ENCODE measurements at regions of chr16 and their contacts with region 1.

Region 1: DNA sequence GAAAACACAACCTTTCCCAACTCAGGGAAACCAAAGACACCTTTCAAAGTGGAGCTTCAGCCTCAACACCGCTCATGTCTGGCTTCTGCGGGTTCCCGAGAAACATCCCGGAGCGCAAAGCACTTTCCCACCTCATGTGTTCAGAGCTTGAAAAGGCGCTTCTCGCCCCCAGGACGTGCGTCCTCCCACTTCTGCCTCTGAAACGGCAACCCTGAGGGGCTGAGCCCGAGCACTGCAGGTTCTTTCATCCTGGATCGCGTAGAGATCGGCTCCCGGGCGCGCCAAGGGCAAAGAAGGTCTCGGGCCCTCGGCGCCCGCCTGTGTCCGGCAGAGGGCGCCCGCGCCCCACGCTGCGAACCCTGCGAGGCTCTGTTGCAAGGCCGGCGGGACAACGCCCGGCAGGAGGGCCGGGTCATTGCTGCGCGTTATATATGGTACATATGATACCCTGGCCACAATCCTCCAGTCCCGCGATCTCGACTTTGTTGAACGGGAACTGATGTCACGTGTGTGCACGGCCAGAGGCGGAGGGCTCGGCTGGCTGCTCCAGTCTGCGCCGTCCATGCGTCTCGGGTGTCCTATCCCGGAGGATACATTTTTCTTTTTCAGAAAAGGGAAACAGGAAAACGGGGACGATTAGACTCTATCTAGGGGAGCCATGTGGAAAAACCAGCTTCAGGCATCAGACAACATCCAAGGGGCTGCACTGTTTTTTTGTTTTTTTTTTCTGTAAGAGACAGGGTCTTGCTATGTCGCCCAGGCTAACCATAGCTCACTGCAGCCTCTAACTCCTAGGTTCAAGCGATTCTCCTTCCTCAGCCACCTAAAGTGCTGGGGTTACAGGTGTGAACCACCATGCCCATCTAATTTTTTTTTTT is 19.1 kb downstream of the COQ7 start:
- DNase-seq: no peak
- H3K4me3 ChIP-seq: peak overlapping the region; percentile 8 to 59 (median 44)
- H3K27ac ChIP-seq: peak overlapping the region in 2 of 4 donors; percentile 39 to 59
- H3K4me1 ChIP-seq: peaks cover 6 to 13% (median 10%) of the 10 kb centered on the region in 3 donors
- H3K27me3 ChIP-seq: no peaks in the 10 kb centered on the region
- CTCF ChIP-seq: peak; percentile 95 to 100 (median 98)
- POLR2A ChIP-seq: no peak

Region 2: GRCh38 chr16:18979936-18980335 is 106.6 kb before region 1 on chr16:
- intact Hi-C with region 1: no loop called
- DNase-seq: no peak
- H3K4me3 ChIP-seq: no peak overlapping the region
- H3K27ac ChIP-seq: no peak overlapping the region
- H3K4me1 ChIP-seq: peaks cover 5 to 22% (median 9%) of the 10 kb centered on the region in 3 donors
- H3K27me3 ChIP-seq: peaks cover 0 to 24% (median 0%) of the 10 kb centered on the region in 4 donors
- CTCF ChIP-seq: no peak
- POLR2A ChIP-seq: no peak

Region 3: DNA sequence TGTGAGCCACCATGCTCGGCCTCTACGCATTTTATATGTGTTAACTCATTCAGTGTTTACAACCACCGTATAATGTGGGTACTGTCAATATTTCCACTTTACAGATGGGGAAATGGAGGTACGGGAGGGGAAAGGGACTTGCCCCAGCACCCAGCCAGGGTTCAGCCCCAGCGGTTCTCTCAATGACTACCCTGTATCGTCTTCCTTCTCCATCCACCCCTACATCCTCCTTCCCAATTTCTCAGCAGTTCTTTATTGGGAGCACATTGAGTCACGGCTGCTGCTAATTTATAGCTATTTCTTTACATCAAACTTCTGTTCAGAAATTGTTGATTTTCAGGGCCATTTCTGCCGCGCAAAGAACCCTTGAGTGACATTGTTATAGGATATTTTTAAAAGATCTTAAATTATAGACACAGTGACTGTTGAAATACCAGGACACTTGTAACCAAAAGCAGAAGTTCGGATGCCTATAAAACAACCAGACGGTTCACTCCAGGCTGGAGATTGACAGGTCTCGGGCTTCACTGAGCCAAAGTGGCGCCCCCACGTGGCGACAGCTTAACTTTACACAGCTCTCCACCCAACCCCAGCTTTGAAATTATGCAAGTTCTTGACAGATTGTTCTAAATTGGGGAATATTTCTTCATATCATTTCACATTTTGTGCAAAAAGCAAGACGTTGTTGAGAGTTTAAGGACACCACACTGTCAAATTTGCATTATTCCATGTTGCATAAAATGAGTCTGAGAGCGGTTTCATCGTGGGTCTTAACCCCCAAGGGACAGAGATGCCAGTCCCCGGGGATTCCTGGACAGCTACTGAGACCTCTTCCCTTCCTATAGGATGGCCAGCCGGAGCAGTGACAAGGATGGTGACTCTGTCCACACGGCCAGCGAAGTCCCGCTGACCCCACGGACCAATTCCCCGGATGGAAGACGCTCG is 93.3 kb after region 1 on chr16:
- intact Hi-C with region 1: loop called (anchors 5 kb)
- DNase-seq: no peak
- H3K4me3 ChIP-seq: no peak overlapping the region
- H3K27ac ChIP-seq: no peak overlapping the region
- H3K4me1 ChIP-seq: peaks cover 0 to 10% (median 4%) of the 10 kb centered on the region in 3 donors
- H3K27me3 ChIP-seq: no peaks in the 10 kb centered on the region
- CTCF ChIP-seq: peak; percentile 43 to 73 (median 56)
- POLR2A ChIP-seq: no peak

Region 4: DNA sequence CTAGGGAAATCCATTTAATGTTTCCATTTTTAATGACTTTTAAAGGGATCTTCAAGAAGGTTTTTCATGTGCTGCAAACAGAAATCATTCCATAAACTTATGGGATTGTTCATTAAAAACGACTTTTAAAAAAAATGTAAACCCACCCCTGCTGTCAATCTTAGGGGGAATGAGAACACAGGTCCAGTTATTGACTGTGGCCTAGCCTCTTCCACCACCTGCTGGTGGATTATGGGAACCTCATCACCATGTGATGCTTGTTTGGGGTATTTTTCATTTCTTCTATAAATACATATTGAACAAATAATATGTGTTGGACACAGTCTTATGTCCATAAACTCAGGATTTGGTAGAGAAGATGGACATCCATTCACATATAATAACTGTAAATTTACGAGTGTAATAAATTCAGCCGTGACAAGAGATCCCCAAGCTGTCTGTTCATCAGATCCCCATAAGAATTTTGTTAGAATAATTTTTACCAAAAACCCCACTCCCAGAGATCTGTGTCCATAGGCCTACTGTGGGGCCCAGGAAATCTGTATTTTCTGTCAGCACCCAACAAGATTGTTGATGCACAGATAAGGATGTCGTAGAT is 289.1 kb after region 1 on chr16:
- intact Hi-C with region 1: loop called (anchors 5 kb)
- DNase-seq: no peak
- H3K4me3 ChIP-seq: no peak overlapping the region
- H3K27ac ChIP-seq: no peak overlapping the region
- H3K4me1 ChIP-seq: peaks cover 0 to 7% (median 0%) of the 10 kb centered on the region in 3 donors
- H3K27me3 ChIP-seq: no peaks in the 10 kb centered on the region
- CTCF ChIP-seq: peak; percentile 80 to 93 (median 88)
- POLR2A ChIP-seq: no peak

Region 5: DNA sequence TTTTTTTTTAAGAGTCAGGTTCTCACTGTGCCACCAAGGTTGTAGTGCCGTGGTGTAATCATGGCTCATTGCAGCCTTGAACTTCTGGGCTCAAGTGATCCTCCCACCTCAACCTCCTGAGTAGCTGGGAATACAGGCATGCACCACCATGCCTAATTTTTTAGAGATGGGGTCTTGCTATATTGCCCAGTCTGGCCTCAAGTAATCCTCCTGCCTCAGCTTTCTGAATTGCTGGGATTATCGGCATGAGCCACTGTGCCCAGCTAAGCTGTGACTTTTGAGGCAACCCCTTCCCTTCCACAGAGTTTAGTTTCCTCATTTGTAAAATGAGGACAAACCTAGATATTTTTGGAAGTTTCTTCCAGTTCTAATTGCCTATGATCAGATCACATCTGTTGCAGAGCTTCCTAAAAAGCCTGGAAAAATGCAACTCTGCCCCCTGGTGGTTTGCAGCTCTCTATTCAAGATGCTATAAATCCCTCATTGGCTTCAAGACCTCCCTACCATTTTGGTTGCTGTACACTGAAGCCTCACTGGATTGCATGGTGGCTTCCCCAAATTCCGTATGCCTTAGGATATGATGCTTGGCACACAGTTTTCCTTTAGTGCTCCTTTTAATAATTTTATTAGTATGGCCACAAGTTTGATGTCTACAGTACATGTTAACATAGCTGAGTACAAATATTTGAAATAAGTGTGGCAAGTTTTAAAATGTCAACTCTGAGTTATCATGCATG is 416.0 kb after region 1 on chr16:
- intact Hi-C with region 1: loop called (anchors 10 kb)
- DNase-seq: peak; percentile 3
- H3K4me3 ChIP-seq: no peak overlapping the region
- H3K27ac ChIP-seq: no peak overlapping the region
- H3K4me1 ChIP-seq: no peaks in the 10 kb centered on the region
- H3K27me3 ChIP-seq: no peaks in the 10 kb centered on the region
- CTCF ChIP-seq: peak; percentile 75 to 87 (median 78)
- POLR2A ChIP-seq: no peak

Measured in esophagus squamous epithelium (tissue), 5 donors.